Left cardiac atrium (tissue), 4 donors: ENCODE measurements at regions of chr5 and their contacts with region 1.

Region 1: DNA sequence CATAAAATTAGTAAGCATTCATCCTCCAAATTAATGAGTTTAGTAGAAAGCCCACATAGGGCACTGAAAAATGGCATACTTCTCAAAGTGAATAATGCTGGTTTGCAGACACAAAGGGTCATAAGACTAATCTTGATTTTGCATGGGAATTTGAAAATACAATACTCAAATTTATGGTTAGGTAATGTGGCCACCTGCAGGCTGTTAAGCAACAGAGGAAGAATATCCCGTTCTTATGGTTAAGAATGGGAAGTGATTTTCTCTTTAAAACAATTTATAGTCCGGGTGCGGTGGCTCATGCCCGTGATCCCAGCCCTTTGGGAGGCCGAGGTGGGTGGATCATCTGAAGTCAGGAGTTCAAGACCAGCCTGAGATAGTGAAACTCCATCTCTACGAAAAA is 9.4 kb upstream of the PLCXD3 start:
- DNase-seq: no peak
- ATAC-seq: no peak

Region 2: GRCh38 chr5:40093550-40093949 is 1426.3 kb before region 1 on chr5:
- intact Hi-C with region 1: no loop called
- DNase-seq: no peak
- ATAC-seq: no peak

Region 3: DNA sequence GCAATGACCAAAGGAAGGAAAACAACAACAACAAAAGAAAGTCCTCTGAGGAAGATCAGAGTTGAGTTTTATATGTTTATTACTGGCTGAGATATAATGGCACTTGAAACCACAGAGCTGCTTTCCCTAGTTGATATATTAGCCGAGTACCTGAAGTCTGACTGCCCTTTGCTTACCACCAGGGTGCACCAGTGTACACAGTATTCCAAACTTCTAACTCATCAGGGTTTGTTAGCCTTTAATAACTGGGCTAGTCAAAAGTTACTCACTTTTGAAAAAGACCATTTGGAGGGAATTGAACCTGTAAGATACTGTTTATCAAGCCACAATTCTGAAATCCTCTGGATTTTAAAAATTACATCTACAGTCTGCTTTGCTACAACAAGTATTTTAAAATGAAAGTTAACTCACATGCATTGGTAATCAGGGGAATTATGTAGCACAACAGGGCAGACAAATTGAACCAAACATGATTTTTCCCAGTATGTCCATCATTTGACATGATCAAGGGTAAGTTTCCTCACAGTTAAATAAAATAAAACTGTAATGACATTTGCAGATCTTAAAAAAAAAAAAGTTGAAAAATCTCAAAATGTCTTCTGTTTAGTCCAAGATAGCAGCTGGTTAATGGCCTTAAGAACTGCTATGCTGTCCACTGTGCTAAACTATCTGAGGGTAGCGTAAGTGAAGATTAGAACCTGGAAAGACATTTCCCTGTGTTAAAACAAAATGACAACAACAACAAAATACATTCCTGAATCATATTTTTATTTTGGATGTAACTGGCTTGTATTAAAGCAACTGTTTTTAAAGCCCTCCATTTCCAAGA is 249.2 kb before region 1 on chr5:
- intact Hi-C with region 1: loop called in 1 of 2 experiments (anchors 5 kb)
- DNase-seq: peak; percentile 39
- ATAC-seq: peak; percentile 95